ENCODE measurements at regions of chr1 and their contacts with region 1.

Region 1: GRCh38 chr1:114108751-114109255 is 44.9 kb downstream of the SYT6 start:
- H3K4me3 Mint-ChIP-seq: no peak overlapping the region
- H3K27ac Mint-ChIP-seq: peak overlapping the region; percentile 90
- H3K4me1 Mint-ChIP-seq: peaks cover 91% of the 10 kb centered on the region
- H3K27me3 Mint-ChIP-seq: peaks cover 1% of the 10 kb centered on the region

Region 2: GRCh38 chr1:114152508-114153260 is 43.9 kb after region 1 on chr1:
- intact Hi-C with region 1: loop called (anchors 10 kb)
- H3K4me3 Mint-ChIP-seq: peak overlapping the region; percentile 69
- H3K27ac Mint-ChIP-seq: peak overlapping the region; percentile 25
- H3K4me1 Mint-ChIP-seq: peaks cover 63% of the 10 kb centered on the region
- H3K27me3 Mint-ChIP-seq: peaks cover 76% of the 10 kb centered on the region